ENCODE measurements at regions of chr1 and their contacts with region 1.

Region 1: GRCh38 chr1:6245086-6245868 is 1.3 kb downstream of the HES3 start:
- DNase-seq: peak; percentile 87
- ATAC-seq: peak; percentile 66

Region 2: GRCh38 chr1:6052543-6053205 is 192.6 kb before region 1 on chr1:
- intact Hi-C with region 1: loop called (anchors 5 kb)
- DNase-seq: peak; percentile 82
- ATAC-seq: peak; percentile 61

Region 3: GRCh38 chr1:6259491-6260425 is 14.5 kb after region 1 on chr1:
- intact Hi-C with region 1: no loop called
- DNase-seq: peak; percentile 90
- ATAC-seq: peak; percentile 87

Region 4: GRCh38 chr1:6275826-6276782 is 30.8 kb after region 1 on chr1:
- intact Hi-C with region 1: no loop called
- DNase-seq: no peak
- ATAC-seq: peak; percentile 77

Region 5: GRCh38 chr1:6338695-6339094 is 93.4 kb after region 1 on chr1:
- intact Hi-C with region 1: loop called (anchors 5 kb)
- DNase-seq: no peak
- ATAC-seq: no peak

Region 6: GRCh38 chr1:6401673-6402072 is 156.4 kb after region 1 on chr1:
- intact Hi-C with region 1: loop called (anchors 5 kb)
- DNase-seq: no peak
- ATAC-seq: no peak

Region 7: DNA sequence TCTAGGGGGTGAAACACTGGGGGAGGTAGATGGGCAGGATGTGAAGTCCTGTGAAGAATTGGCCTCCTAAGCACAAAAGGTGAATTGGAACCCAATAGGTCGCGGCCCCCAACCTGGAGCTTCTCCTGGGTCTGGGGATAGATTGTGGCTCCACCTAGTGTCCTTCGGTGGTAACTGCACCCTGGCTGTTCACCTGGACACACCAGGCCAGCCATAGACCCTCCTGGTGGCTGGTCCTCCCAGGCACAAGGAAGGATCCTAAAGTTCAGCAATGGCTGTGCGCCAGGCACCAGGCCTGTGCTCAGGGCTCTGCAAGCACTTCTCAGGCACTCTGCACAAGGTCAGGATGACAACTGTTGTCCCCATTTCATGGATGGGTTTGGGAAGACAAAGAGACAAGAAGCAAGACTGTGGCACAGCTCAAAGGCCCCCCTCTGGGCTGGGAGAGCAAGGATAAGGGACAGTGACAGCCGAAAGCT is 192.8 kb after region 1 on chr1:
- intact Hi-C with region 1: loop called (anchors 10 kb)
- DNase-seq: peak; percentile 81
- ATAC-seq: peak; percentile 69

Measured in sciatic nerve (tissue), 2 donors.